WTC11 (cell line): ENCODE measurements at regions of chr16 and their contacts with region 1.

Region 1: DNA sequence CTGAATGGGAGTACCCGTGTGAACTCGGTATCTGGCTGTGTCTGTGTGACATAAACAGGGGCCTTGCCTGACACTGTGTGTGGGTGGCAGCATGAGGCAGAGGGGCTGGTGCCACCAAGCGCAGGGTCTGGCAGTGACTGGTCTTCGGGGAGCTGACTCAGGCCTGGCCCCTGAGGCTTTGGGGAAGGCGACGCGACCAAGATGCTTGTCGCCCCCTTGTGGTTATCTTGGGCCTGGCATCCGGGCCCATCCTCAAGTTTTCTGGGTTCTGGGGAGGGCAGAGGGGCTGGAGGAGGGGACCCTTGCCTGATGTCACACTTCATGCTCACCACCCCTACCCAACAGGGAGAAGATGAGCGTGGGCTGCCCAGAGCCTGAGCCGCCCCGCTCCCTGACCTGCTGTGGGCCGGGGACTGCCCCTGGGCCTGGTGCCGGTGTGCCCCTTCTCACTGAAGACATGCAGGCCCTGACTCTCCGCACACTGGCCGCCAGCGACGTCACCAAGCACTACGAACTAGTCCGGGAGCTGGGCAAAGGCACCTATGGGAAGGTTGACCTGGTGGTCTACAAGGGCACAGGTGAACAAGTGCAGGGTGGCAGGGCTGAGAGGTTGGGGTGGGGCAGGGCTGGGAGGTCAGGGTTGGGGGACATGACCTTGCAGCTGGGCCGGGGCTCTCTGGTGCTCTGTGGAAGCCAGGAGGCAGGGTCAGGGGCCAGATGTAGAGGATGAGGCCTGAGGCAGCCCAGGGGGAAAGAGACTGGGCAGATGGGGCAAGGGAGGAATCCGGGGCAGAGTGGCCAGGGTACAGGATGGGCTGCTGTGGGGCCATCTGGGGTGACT is 24.9 kb downstream of the SBK1 start:
- DNase-seq: peak; percentile 84
- ATAC-seq: peak; percentile 72
- H3K4me3 Mint-ChIP-seq: no peak overlapping the region
- H3K27ac Mint-ChIP-seq: no peak overlapping the region
- H3K4me1 Mint-ChIP-seq: no peaks in the 10 kb centered on the region
- H3K27me3 Mint-ChIP-seq: no peaks in the 10 kb centered on the region
- CTCF ChIP-seq: peak; percentile 84

Region 2: DNA sequence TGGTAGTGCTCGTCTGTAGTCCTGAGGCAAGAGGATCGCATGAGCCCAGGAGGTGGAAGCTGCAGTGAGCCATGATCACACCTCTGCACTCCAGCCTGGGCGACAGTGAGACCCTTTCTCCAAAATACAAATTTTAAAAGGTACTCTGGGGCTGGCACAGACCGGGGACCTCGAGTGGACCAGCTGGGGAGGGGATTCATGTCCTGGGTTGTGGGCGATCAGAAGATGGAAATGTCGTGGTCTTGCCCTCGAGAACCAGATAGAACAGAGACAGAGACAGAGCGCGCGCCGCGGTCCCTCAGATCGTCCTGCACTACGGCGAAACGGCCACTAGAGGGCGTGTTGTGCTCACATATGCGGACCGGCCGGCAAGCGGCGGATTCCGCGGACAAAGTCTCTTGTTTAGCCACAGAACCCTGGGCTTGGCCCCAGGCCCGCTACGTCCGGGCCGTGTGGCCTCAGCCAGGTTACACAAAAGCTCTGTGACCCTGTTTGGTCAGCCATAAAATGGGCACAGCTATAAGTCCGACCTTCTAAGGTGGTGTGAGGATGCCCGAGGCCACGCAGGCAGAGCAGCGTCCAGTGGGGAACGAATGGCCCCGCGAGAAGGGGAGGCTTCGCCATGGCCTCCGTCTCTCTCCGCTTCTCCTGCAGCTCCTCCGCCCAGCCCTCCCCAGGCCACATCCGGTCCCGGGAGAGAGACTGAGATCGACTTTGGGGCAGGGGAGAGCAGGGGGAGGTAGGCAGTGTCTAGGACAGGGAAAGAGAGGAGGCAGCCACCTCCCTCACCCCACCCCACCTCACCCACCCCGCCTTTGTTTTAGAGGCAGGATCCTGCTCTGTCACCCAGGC is 39.5 kb before region 1 on chr16:
- CTCF ChIA-PET with region 1: interaction called, 41 read pairs
- POLR2A ChIA-PET with region 1: interaction called, 3 read pairs
- DNase-seq: peak; percentile 93
- ATAC-seq: peak; percentile 80
- H3K4me3 Mint-ChIP-seq: peak overlapping the region; percentile 73
- H3K27ac Mint-ChIP-seq: peak overlapping the region; percentile 70; the same call in 1 of the 2 replicates
- H3K4me1 Mint-ChIP-seq: peaks cover 16% of the 10 kb centered on the region
- H3K27me3 Mint-ChIP-seq: peaks cover 27% of the 10 kb centered on the region
- CTCF ChIP-seq: peak; percentile 99

Region 3: DNA sequence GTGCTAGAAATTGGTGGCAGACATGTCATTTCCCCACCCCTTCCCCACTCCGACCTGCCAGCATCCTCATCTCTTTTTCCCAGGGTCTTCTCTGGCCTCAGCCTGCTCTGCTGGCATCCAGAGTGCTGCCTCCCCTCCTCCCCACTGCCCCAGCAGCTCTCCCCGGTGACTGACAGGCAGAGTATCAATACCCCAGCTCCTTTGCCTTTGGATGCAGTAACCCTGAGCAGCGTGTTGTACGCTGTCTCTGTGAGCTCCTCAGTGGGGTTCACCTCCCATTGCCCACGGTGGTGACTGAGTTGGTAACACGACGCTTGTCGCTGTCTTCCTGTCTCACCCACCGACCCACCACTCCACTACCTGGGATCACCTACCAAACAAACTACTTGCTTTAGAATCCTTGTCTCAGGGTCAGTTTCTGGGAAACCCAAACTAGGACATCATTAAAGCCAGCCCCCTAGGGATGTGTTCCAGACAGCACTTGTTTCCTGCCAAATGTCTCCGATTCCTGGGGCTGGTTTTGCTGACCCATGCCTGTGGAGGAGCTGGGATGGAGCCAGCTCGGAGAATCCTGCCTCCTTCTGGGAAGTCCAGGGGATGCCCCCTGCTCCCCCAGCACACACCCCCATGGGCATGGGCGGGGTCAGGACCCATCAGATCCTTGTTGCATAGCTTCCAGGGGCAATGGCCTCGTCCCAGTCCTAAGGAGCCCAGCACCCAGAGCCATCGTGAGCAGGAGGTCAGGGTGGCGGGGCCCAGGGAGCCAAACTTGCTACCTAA is 33.3 kb before region 1 on chr16:
- CTCF ChIA-PET with region 1: interaction called, 41 read pairs
- POLR2A ChIA-PET with region 1: interaction called, 3 read pairs
- DNase-seq: peak; percentile 38
- ATAC-seq: peak; percentile 71
- H3K4me3 Mint-ChIP-seq: no peak overlapping the region
- H3K27ac Mint-ChIP-seq: peak overlapping the region; percentile 12
- H3K4me1 Mint-ChIP-seq: peaks cover 19% of the 10 kb centered on the region
- H3K27me3 Mint-ChIP-seq: no peaks in the 10 kb centered on the region
- CTCF ChIP-seq: no peak

Region 4: DNA sequence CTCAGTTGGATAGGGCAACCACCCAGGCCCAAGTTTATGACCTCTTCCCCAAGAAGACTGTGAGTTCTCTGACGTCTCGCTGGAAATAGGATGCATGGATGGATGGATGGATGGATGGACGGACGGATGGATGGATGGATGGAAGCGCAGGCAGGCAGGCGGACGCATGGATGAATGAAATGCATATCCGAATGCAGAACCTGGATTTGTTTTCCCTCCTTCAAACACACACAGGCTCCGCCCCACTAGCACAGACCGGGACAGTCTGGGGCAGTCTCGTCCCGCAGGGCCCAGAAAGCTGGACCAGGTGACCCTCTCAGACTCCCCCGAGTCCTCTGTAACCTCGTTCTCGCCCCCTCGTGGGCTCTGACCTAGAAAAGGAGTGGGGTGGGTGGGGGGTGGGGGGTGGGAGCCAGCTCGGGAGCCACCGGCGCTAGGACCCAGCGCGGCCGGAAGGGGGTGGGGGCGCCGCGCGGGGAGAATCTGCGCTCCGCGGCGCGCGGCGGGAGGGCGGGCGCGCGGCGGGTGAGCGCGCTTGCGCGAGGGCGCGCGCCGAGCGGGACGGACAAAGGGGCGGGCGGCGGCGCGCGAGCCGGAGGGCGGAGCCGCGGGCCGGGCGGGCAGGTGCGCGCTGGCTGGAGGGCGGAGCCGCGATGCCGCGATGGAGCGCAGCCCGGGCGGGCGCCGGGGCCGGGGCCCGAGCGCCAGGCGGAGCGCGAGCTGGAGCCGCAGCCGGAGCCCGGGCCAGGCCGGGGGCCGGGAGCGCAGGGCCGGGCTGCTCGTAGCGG is 25.2 kb before region 1 on chr16 and contains the start of gene SBK1:
- CTCF ChIA-PET with region 1: interaction called, 27 read pairs
- POLR2A ChIA-PET with region 1: interaction called, 3 read pairs
- DNase-seq: peak; percentile 80
- ATAC-seq: peak; percentile 74
- H3K4me3 Mint-ChIP-seq: peak within 1 kb of the TSS; percentile 91
- H3K27ac Mint-ChIP-seq: peak within 1 kb of the TSS; percentile 82
- H3K4me1 Mint-ChIP-seq: peaks cover 45% of the 10 kb centered on the region
- H3K27me3 Mint-ChIP-seq: no peaks in the 10 kb centered on the region
- CTCF ChIP-seq: no peak
- total RNA-seq, gene SBK1: 79.4 to 85.7 TPM (median 82.6 TPM) in 3 replicates

Region 5: GRCh38 chr16:28297784-28298510 is 19.3 kb before region 1 on chr16:
- CTCF ChIA-PET with region 1: interaction called, 27 read pairs
- POLR2A ChIA-PET with region 1: interaction called, 3 read pairs
- DNase-seq: no peak
- ATAC-seq: peak; percentile 6
- H3K4me3 Mint-ChIP-seq: no peak overlapping the region
- H3K27ac Mint-ChIP-seq: peak overlapping the region; percentile 77
- H3K4me1 Mint-ChIP-seq: peaks cover 49% of the 10 kb centered on the region
- H3K27me3 Mint-ChIP-seq: no peaks in the 10 kb centered on the region
- CTCF ChIP-seq: no peak